ENCODE measurements at regions of chr2 and their contacts with region 1.

Region 1: DNA sequence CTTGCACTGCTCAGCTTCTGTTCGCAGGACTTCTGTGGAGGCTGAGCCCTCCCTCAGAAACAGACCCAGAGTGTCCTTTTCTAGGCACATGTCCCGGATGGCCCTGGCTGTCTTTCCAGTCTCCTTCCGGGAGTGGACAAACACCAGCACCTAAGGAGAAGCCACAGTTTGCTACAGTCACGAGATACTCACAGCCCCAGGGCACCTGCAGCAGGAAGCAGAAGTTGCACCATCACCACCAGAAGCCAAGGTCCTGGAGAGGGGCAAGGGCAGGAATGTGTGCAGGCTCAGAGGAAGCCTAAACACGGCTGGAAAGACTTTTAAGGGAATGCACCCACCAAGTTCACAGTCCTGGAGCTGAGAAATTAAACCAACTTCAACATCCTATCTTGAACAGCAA is 13.6 kb downstream of the SNRNP200 start:
- DNase-seq: no peak
- ATAC-seq: no peak
- H3K4me3 Mint-ChIP-seq: no peak overlapping the region
- H3K27ac Mint-ChIP-seq: no peak overlapping the region
- H3K4me1 Mint-ChIP-seq: peaks cover 4% of the 10 kb centered on the region
- H3K27me3 Mint-ChIP-seq: no peaks in the 10 kb centered on the region

Region 2: DNA sequence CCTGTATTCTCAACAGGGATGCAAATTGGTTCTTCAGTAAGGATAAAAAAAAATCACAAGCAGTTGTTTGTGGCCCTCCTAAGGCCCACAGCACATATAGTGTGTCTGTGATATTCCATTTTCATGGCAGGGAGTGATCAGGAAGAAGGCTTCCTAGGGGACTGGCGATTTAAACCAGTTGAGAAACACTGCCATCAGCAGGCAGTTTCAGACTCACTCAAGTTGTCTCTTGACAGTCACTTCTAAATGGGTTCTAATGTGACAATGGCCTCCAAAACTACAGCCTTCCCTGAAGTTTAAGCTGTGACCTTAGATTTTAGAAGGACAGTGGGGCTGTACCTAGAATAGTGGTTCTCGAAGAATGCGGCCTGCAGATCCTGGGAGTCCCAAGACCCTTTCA is 19.7 kb before region 1 on chr2:
- CTCF ChIA-PET with region 1: no interaction called
- POLR2A ChIA-PET with region 1: no interaction called
- intact Hi-C with region 1: loop called in 1 of 2 experiments (anchors 2 kb)
- DNase-seq: no peak
- ATAC-seq: no peak
- H3K4me3 Mint-ChIP-seq: no peak overlapping the region
- H3K27ac Mint-ChIP-seq: no peak overlapping the region
- H3K4me1 Mint-ChIP-seq: peaks cover 20% of the 10 kb centered on the region
- H3K27me3 Mint-ChIP-seq: no peaks in the 10 kb centered on the region